Common myeloid progenitor, CD34-positive (primary cell): ENCODE measurements at regions of chr14 and their contacts with region 1.

Region 1: GRCh38 chr14:61321385-61322010 is at the start of gene PRKCH:
- DNase-seq: peak; percentile 89 to 96 (median 94)
- H3K4me3 ChIP-seq: peak within 1 kb of the TSS; percentile 70 to 98 (median 84)
- H3K27ac ChIP-seq: peak within 1 kb of the TSS; percentile 61 to 80
- H3K4me1 ChIP-seq: peaks cover 0 to 52% (median 39%) of the 10 kb centered on the region in 4 experiments
- H3K27me3 ChIP-seq: no peaks in the 10 kb centered on the region

Region 2: GRCh38 chr14:61188978-61189808 is 132.3 kb before region 1 on chr14:
- CTCF ChIA-PET with region 1: no interaction called
- POLR2A ChIA-PET with region 1: no interaction called
- DNase-seq: peak; percentile 20 to 45 (median 38)
- H3K4me3 ChIP-seq: peak overlapping the region in 4 of 7 experiments; percentile 14 to 45 (median 18)
- H3K27ac ChIP-seq: no peak overlapping the region
- H3K4me1 ChIP-seq: peaks cover 0 to 6% (median 0%) of the 10 kb centered on the region in 4 experiments
- H3K27me3 ChIP-seq: peaks cover 20 to 65% (median 27%) of the 10 kb centered on the region in 5 experiments

Region 3: DNA sequence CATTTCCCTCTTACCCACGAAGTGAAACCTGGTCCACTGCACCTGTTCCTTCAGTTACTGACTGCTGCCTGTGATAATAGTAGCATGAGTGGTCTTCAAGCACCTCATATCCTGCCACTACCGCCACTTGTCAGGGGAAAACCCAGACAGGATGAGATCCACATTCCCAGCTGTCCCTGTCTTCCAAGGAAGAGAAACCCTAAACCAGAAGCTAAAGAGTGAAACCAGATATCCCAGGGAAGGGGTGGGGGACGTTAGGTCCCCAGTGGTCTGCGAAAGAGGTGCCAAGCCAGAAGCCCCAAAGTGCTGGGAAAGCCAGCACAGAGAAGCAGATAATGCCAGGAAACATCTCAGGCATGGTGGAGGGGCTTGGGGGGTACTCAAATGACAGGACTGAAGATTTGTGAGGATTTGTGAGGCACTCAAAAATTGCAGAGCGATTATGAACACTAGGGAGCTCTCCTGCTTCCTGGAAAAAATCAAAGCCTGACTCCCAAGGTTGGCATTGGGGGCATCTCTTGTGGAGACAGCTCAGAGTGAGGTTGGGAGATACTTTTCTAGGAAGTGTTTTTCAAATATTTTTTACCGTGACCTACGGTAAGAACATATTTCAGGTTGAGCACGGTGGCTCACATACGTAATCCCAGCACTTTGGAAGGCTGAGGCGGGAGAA is 118.3 kb before region 1 on chr14:
- CTCF ChIA-PET with region 1: no interaction called
- POLR2A ChIA-PET with region 1: no interaction called
- DNase-seq: no peak
- H3K4me3 ChIP-seq: no peak overlapping the region
- H3K27ac ChIP-seq: no peak overlapping the region
- H3K4me1 ChIP-seq: no peaks in the 10 kb centered on the region
- H3K27me3 ChIP-seq: peaks cover 4 to 20% (median 6%) of the 10 kb centered on the region in 5 experiments

Region 4: DNA sequence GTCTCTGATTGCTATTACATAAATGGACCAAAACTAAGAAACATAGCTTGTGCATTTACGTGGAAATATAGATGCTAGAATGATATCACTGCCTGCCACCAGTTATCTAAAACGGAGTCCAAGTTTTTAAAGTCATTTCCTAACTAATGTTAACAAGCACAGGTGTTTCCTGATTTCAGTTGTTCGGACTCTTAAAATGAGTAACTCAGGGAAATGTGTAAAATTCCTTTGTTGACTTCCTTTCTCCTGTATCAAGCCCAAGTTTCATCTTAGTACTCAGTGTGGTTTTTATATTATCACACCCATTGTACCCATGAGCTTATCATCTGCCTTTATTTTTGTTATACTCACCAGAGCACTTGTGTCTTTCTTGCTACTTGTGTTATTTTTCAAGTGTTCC is 13.3 kb before region 1 on chr14:
- CTCF ChIA-PET with region 1: interaction called, 44 read pairs
- POLR2A ChIA-PET with region 1: interaction called, 6 read pairs
- DNase-seq: peak; percentile 81 to 93 (median 87)
- H3K4me3 ChIP-seq: peak overlapping the region in 1 of 7 experiments; percentile 17
- H3K27ac ChIP-seq: peak overlapping the region; percentile 68 to 85
- H3K4me1 ChIP-seq: peaks cover 12 to 29% (median 22%) of the 10 kb centered on the region in 4 experiments
- H3K27me3 ChIP-seq: no peaks in the 10 kb centered on the region